Heart right ventricle (tissue), 16 donors: ENCODE measurements at regions of chrX and their contacts with region 1.

Region 1: GRCh38 chrX:155563099-155563498 is 49.7 kb downstream of the TMLHE start:
- DNase-seq: no peak
- ATAC-seq: no peak
- H3K4me3 ChIP-seq: no peak overlapping the region
- H3K27ac ChIP-seq: no peak overlapping the region
- H3K4me1 ChIP-seq: no peaks in the 10 kb centered on the region
- H3K27me3 ChIP-seq: no peaks in the 10 kb centered on the region
- CTCF ChIP-seq: no peak

Region 2: DNA sequence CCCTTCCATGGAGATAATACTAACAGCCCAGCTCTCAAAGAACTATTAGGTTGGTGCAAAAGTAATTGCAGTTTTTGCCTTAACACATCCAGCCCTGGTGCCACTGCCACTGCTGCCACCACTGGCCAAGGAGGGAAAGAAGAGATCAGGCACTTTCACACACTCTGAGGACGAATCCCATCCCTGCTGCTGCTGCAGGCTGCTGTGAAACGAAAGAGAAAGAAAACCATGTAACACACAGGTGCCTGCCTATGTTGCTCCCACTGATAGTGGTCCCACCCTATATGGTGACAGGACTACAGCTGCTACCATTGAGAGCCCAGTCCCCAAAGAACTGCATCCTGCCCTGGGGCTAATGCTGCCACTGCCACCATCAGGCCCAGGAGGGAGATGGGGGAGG is 14.6 kb after region 1 on chrX:
- intact Hi-C with region 1: loop called in 1 of 10 experiments (anchors 2 kb)
- DNase-seq: no peak
- ATAC-seq: no peak
- H3K4me3 ChIP-seq: no peak overlapping the region
- H3K27ac ChIP-seq: no peak overlapping the region
- H3K4me1 ChIP-seq: peaks cover 0 to 7% (median 0%) of the 10 kb centered on the region in 9 donors
- H3K27me3 ChIP-seq: no peaks in the 10 kb centered on the region
- CTCF ChIP-seq: no peak

Region 3: GRCh38 chrX:155938132-155938531 is 375.0 kb after region 1 on chrX:
- intact Hi-C with region 1: no loop called
- DNase-seq: no peak
- ATAC-seq: no peak
- H3K4me3 ChIP-seq: no peak overlapping the region
- H3K27ac ChIP-seq: no peak overlapping the region
- H3K4me1 ChIP-seq: no peaks in the 10 kb centered on the region
- H3K27me3 ChIP-seq: no peaks in the 10 kb centered on the region
- CTCF ChIP-seq: no peak